HepG2 (cell line): ENCODE measurements at regions of chr10 and their contacts with region 1.

Region 1: GRCh38 chr10:75210282-75211006 is at the start of gene VDAC2:
- DNase-seq: peak; percentile 73
- ATAC-seq: peak; percentile 87
- H3K4me3 ChIP-seq: peak within 1 kb of the TSS; percentile 80 to 91 (median 90)
- H3K27ac ChIP-seq: peak within 1 kb of the TSS; percentile 91
- H3K4me1 ChIP-seq: peaks cover 69% of the 10 kb centered on the region
- H3K27me3 ChIP-seq: no peaks in the 10 kb centered on the region; a peak in 1 of 5 replicates
- CTCF ChIP-seq: no peak; the same call in 1 of the 2 replicates
- EP300 ChIP-seq: peak in 1 of 2 experiments; percentile 26; a peak in 1 of 4 replicates
- POLR2A ChIP-seq: peak; percentile 61 to 89
- RAD21 ChIP-seq: peak; percentile 52
- total RNA-seq, gene VDAC2: 222 and 289 TPM in 2 replicates

Region 2: DNA sequence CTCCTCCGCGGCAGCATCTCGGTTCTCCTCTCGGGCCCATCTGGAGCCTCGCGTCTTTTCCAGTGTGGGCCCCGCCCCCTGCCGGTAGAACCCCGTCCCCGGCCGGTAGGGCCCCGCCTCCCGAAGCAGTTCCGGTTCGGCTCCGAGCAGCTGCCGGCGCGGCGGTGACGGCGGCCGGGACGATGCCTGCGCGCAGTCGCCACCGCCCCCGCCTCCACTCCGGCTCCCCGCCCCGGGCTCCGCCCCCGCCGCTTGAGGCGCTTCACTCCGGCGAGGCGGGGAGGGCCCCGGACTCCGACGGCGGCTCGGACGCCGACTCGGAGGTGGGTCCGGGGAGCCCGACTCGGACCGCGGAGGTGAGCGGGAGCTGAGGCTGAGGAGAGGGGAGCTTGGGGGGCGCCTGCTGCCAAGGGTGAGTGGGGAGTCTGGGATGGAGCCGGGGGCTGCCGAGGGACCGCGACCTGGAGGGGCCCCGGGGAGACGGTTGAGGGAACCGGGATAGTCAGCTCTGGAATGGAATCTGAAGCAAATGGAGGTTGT is 99.0 kb before region 1 on chr10 and contains the start of gene SAMD8:
- CTCF ChIA-PET with region 1: no interaction called
- POLR2A ChIA-PET with region 1: interaction called, 10 read pairs
- in situ Hi-C with region 1: no loop called
- intact Hi-C with region 1: no loop called
- DNase-seq: peak; percentile 95
- ATAC-seq: peak; percentile 74; the same call in 2 of the 3 replicates
- H3K4me3 ChIP-seq: peak within 1 kb of the TSS; percentile 92 to 95 (median 94)
- H3K27ac ChIP-seq: peak within 1 kb of the TSS; percentile 91
- H3K4me1 ChIP-seq: peaks cover 69% of the 10 kb centered on the region
- H3K27me3 ChIP-seq: no peaks in the 10 kb centered on the region; a peak in 1 of 5 replicates
- CTCF ChIP-seq: peak; percentile 43
- EP300 ChIP-seq: no peak
- POLR2A ChIP-seq: peak in 1 of 2 experiments; percentile 67; a peak in 2 of 4 replicates
- RAD21 ChIP-seq: no peak
- total RNA-seq, gene SAMD8: 10.3 and 10.4 TPM in 2 replicates

Region 3: DNA sequence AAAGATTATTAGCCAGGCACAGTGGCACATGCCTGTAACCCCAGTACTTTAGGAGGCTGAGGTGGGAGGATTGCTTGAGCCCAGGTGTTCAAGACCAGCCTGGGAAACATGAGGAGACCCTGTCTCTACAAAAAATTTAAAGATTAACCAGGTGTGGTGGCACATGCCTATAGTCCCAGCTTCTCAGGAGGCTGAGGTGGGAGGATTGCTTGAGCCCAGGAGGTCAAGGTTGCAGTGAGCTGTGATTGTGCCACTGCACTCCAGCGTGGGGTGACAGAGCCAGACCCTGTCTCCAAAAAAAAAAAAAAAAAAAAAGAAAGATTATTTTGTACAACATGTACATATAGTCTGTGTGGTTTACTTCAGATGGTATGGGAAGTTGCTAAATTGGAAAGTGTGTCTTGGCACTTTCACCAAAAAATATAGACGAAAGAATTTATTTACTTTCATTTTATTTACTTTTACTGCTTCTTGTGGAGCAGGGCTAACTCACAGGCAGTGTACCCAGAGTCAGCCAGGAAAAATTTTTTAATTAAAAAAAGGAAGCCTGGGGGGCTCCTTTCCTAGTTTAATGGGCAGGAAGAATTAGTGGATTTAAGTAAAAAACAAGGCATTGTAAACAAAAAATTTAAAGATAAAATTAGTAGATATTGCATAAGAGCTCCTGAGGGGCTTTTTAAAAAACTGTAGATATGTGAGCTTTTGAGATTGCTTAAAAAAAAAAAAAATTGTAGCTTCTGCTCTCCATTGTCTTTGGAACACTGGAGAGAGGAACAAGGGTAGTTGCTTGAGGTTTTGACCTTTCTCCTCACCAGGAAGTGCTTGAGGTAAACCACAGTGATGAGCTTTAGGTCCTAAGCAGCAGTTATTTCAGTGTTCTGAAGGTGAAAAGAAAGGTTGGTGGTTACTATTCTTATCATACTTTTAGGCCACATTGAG is 44.5 kb before region 1 on chr10:
- CTCF ChIA-PET with region 1: no interaction called
- POLR2A ChIA-PET with region 1: interaction called, 16 read pairs
- in situ Hi-C with region 1: no loop called
- intact Hi-C with region 1: loop called (anchors 1 kb)
- DNase-seq: no peak
- ATAC-seq: no peak
- H3K4me3 ChIP-seq: no peak overlapping the region
- H3K27ac ChIP-seq: peak overlapping the region; percentile 34
- H3K4me1 ChIP-seq: peaks cover 51% of the 10 kb centered on the region
- H3K27me3 ChIP-seq: no peaks in the 10 kb centered on the region
- CTCF ChIP-seq: no peak
- EP300 ChIP-seq: no peak
- POLR2A ChIP-seq: no peak
- RAD21 ChIP-seq: no peak

Region 4: GRCh38 chr10:75187961-75188426 is 22.4 kb before region 1 on chr10:
- CTCF ChIA-PET with region 1: no interaction called
- POLR2A ChIA-PET with region 1: interaction called, 16 read pairs
- in situ Hi-C with region 1: no loop called
- intact Hi-C with region 1: no loop called
- DNase-seq: peak; percentile 69
- ATAC-seq: peak; percentile 45
- H3K4me3 ChIP-seq: no peak overlapping the region
- H3K27ac ChIP-seq: no peak overlapping the region
- H3K4me1 ChIP-seq: peaks cover 76% of the 10 kb centered on the region
- H3K27me3 ChIP-seq: no peaks in the 10 kb centered on the region
- CTCF ChIP-seq: peak; percentile 78
- EP300 ChIP-seq: no peak
- POLR2A ChIP-seq: no peak
- RAD21 ChIP-seq: peak; percentile 79

Region 5: DNA sequence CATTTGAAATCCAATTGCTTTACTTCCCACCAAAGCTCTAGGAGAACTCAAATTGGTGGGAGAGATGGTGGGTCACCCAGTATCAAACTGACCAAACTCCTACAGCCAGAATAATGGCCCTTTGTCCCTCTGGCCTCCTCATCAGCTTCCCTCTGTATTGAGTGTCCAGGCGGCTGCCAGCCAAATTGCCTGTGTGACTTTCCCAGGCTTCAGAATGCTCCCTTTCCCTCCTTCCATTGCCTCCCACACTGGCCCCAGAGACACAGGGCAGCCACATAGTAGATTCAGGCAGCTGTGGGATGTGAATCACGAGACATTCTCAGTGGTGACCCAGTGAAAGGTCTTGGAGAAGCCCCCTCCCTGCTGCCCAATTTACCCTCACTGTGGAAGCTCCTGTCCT is 12.5 kb before region 1 on chr10:
- CTCF ChIA-PET with region 1: no interaction called
- POLR2A ChIA-PET with region 1: interaction called, 11 read pairs
- in situ Hi-C with region 1: no loop called
- intact Hi-C with region 1: no loop called
- DNase-seq: no peak
- ATAC-seq: no peak
- H3K4me3 ChIP-seq: no peak overlapping the region
- H3K27ac ChIP-seq: no peak overlapping the region
- H3K4me1 ChIP-seq: peaks cover 16% of the 10 kb centered on the region
- H3K27me3 ChIP-seq: no peaks in the 10 kb centered on the region; a peak in 1 of 5 replicates
- CTCF ChIP-seq: no peak
- EP300 ChIP-seq: no peak
- POLR2A ChIP-seq: no peak
- RAD21 ChIP-seq: no peak

Region 6: GRCh38 chr10:75226656-75227055 is 16.2 kb after region 1 on chr10:
- CTCF ChIA-PET with region 1: no interaction called
- POLR2A ChIA-PET with region 1: interaction called, 55 read pairs
- in situ Hi-C with region 1: no loop called
- intact Hi-C with region 1: loop called (anchors 2 kb)
- DNase-seq: no peak
- ATAC-seq: no peak
- H3K4me3 ChIP-seq: no peak overlapping the region
- H3K27ac ChIP-seq: no peak overlapping the region
- H3K4me1 ChIP-seq: peaks cover 67% of the 10 kb centered on the region
- H3K27me3 ChIP-seq: no peaks in the 10 kb centered on the region
- CTCF ChIP-seq: no peak
- EP300 ChIP-seq: no peak
- POLR2A ChIP-seq: no peak
- RAD21 ChIP-seq: no peak

Region 7: GRCh38 chr10:75235375-75236177 is 25.1 kb after region 1 on chr10 and contains the start of gene COMTD1:
- CTCF ChIA-PET with region 1: no interaction called
- POLR2A ChIA-PET with region 1: interaction called, 29 read pairs
- in situ Hi-C with region 1: no loop called
- intact Hi-C with region 1: no loop called
- DNase-seq: peak; percentile 87
- ATAC-seq: peak; percentile 75
- H3K4me3 ChIP-seq: peak within 1 kb of the TSS; percentile 43 to 76 (median 74); a peak in 5 of 6 replicates
- H3K27ac ChIP-seq: peak within 1 kb of the TSS; percentile 65
- H3K4me1 ChIP-seq: peaks cover 52% of the 10 kb centered on the region
- H3K27me3 ChIP-seq: peaks cover 0 to 1% of the 10 kb centered on the region in 2 experiments; a peak in 1 of 5 replicates
- CTCF ChIP-seq: peak; percentile 99
- EP300 ChIP-seq: 0 out of 4 replicates have a peak, but pooled peaks of 1 of the 2 experiments have one; percentile 2
- POLR2A ChIP-seq: peak; percentile 55 to 68; a peak in 3 of 4 replicates
- RAD21 ChIP-seq: peak; percentile 100
- total RNA-seq, gene COMTD1: 9.8 and 18.4 TPM in 2 replicates

Region 8: DNA sequence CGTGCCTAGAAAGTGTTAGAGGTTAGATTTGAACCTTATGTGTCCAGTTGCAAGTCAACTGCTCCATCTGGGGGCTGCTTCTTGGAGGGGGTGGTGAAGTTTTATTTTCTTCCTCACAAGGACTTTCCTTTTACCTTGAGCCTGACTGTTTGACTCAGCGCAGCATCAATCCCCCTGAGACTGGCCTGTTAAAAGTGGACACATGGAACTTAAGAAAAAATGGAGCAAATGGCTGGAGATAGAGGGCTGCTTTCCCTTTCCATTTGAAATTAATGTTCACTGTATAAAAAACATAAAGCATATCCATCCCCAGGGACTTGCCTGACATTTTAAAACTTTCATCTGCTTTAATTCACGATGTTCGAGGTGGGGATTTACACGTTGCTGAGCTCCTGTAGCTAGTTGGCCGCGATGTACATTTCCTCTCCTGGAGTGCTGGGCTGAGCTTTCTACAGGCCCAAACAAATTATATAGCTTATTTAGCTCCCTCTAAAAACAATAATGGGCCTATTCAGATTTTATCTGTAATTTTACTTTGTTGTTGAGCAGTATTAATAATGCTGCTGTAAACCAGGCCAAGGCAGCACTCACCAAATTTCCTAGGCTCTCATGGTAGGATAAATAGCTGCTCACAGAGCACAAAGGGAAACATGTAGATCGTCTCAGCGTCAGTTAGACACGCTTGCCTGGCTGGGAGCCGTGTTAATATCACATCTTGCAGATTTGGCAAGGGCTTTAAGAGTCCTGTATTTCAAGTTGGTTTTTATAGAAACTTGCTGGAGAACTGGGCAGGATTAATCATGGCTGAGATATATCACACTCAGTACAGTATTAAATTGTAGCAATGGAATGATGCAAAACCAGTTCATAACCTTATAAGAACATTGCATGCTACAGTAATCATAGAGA is 472.5 kb after region 1 on chr10:
- CTCF ChIA-PET with region 1: no interaction called
- POLR2A ChIA-PET with region 1: no interaction called
- in situ Hi-C with region 1: no loop called
- intact Hi-C with region 1: no loop called
- DNase-seq: no peak
- ATAC-seq: no peak
- H3K4me3 ChIP-seq: no peak overlapping the region
- H3K27ac ChIP-seq: no peak overlapping the region
- H3K4me1 ChIP-seq: peaks cover 8% of the 10 kb centered on the region; the same call in 1 of the 2 replicates
- H3K27me3 ChIP-seq: no peaks in the 10 kb centered on the region
- CTCF ChIP-seq: no peak
- EP300 ChIP-seq: no peak
- POLR2A ChIP-seq: no peak
- RAD21 ChIP-seq: no peak